Ascending aorta (tissue), 2 donors: ENCODE measurements at regions of chr21 and their contacts with region 1.

Region 1: GRCh38 chr21:43718872-43719747 is at the start of gene PDXK:
- DNase-seq: peak in 1 of 2 donors; percentile 92
- H3K4me3 ChIP-seq: peak within 1 kb of the TSS; percentile 81 to 100
- H3K27ac ChIP-seq: peak within 1 kb of the TSS; percentile 84 to 92
- H3K4me1 ChIP-seq: peaks cover 16 to 27% of the 10 kb centered on the region in 2 donors
- H3K27me3 ChIP-seq: no peaks in the 10 kb centered on the region
- CTCF ChIP-seq: peak in 1 of 3 experiments; percentile 1
- total RNA-seq, gene PDXK: 102 TPM

Region 2: GRCh38 chr21:43703035-43703880 is 15.9 kb before region 1 on chr21:
- intact Hi-C with region 1: loop called (anchors 1 kb)
- DNase-seq: peak in 1 of 2 donors; percentile 83
- H3K4me3 ChIP-seq: peak overlapping the region; percentile 27 to 52
- H3K27ac ChIP-seq: peak overlapping the region; percentile 77 to 82
- H3K4me1 ChIP-seq: peaks cover 20 to 21% of the 10 kb centered on the region in 2 donors
- H3K27me3 ChIP-seq: no peaks in the 10 kb centered on the region
- CTCF ChIP-seq: no peak

Region 3: DNA sequence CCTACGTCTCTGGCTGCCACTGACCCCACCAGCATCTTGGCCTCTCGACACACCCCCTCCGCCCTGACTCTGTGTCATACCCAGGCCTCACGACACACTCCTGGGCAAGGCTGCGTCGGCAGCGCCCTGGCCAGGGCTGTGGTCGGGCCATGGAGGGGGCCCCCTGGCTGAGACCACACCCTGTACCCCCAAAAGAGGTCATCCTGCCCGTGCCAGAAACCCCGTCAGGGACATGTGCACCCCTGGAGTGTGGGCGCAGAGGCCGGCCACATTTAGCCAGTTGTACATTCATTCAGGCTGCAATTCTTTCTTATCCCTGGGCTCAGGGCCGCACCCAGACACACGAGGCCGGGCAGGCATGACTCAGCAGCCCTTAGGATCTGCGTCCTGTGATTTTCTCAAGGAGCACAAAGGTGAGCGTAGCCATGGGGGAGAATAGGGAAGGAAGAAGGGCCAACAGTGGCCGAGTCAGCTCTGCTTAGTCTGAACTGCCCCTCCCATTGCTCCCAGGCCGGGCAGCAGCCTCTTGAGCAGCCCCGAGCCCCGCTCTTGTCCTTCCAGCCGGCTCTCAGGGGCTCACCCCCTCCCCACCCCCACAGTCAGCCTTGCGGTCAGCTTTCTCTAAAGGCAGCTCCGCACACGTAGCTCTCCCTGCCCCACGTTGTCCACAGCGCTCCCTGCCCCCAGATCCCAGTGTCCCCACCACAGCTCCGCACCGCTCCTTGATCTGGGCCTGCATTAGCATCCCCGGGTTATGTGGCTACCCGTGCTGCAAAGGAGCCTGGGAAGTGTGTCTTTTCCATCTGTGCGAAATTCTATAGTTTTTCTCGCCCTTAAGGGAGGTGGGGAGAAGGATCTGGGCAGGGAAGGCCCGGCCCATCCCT is 49.1 kb after region 1 on chr21:
- intact Hi-C with region 1: loop called (anchors 2 kb)
- DNase-seq: no peak
- H3K4me3 ChIP-seq: no peak overlapping the region
- H3K27ac ChIP-seq: no peak overlapping the region
- H3K4me1 ChIP-seq: peaks cover 0 to 3% of the 10 kb centered on the region in 2 donors
- H3K27me3 ChIP-seq: no peaks in the 10 kb centered on the region
- CTCF ChIP-seq: no peak

Region 4: GRCh38 chr21:43805275-43805800 is 86.2 kb after region 1 on chr21:
- intact Hi-C with region 1: no loop called
- DNase-seq: no peak
- H3K4me3 ChIP-seq: no peak overlapping the region
- H3K27ac ChIP-seq: no peak overlapping the region
- H3K4me1 ChIP-seq: no peaks in the 10 kb centered on the region
- H3K27me3 ChIP-seq: no peaks in the 10 kb centered on the region
- CTCF ChIP-seq: no peak